ENCODE measurements at regions of chr22 and their contacts with region 1.

Region 1: DNA sequence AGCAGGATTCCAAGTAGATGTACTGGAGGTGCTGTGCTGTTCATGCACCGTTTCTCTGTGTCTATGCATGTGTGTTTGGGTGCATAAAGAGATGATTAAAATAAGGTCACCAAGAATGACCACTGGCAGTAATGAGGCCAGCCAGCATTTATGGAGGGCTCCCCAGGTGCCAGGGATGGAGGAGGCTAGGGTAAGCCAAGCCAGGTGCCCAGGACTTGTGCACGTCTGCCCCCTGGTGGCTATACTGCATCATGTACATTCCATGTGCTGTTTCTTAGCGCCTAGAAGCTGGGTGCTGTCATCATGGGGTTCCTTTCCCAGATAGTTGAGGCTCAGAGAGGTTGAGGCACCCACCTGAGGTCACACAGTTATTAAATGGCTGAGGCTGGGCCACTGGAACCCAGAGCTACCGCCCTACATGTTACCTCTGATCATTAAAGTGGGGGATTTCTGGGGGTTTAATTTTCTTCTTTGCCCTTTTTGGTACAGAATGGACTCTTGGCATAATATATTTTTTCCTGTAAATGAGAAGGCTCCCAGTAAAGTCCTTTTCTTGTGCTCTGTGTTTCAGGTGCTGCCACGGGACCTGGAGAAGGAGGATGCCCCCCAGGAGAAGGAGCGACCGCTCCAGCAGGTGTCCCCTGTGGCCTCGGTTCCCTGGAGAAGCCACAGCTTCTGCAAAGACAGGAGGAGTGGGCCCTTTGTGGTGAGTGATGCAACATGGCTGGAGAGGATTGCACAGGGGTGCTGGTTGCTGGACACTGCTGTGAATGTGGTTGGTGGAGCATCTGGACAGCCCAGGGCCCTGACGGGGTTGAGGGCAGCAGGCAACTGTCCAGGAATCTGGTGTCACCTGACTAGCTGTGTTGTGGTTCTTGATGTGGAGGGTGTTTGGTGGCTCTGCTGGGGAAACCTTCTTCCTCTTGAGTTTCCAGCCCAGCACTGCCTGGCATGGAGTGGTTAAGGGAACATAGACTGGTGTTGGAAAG is 96.4 kb downstream of the KIAA1671 start:
- DNase-seq: peak; percentile 80
- H3K4me3 Mint-ChIP-seq: no peak overlapping the region
- H3K27ac Mint-ChIP-seq: no peak overlapping the region
- H3K4me1 Mint-ChIP-seq: peaks cover 6% of the 10 kb centered on the region
- H3K27me3 Mint-ChIP-seq: no peaks in the 10 kb centered on the region

Region 2: DNA sequence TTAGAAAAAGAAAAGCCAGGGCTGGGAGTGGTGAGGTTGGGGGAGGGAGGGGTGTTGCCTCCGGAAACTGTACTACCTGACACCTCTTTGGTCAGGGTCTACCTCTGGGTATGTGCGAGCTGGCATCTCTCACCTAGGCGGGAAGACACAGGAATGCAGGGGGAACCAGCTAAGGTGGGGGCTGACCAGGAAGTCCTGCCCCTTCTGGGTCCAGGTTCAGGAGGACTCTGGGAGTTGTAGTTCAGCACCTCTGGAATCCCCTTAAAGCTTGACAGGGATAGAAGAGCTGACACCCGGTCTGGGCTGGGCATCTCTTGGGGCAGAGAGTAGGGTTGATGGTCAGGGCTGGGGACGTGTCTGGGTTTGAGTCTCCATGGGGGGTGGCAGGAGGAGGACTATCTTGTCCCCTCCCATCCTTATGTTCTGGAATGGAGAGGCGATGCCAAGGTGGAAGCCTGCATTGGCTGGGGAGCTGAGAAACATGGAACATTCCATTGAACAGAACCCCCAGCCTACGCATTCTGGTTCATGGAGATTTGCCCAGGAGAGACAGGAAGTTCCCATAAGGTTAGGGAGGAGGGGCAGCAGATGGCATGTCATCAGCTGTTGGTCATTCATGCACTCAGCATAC is 98.6 kb before region 1 on chr22:
- CTCF ChIA-PET with region 1: interaction called, 11 read pairs
- POLR2A ChIA-PET with region 1: interaction called, 3 read pairs
- DNase-seq: no peak
- H3K4me3 Mint-ChIP-seq: peak overlapping the region; percentile 52
- H3K27ac Mint-ChIP-seq: no peak overlapping the region
- H3K4me1 Mint-ChIP-seq: peaks cover 37% of the 10 kb centered on the region
- H3K27me3 Mint-ChIP-seq: peaks cover 67% of the 10 kb centered on the region

Region 3: GRCh38 chr22:25014896-25015755 is 33.8 kb before region 1 on chr22:
- CTCF ChIA-PET with region 1: interaction called, 13 read pairs
- POLR2A ChIA-PET with region 1: no interaction called
- DNase-seq: no peak
- H3K4me3 Mint-ChIP-seq: no peak overlapping the region
- H3K27ac Mint-ChIP-seq: no peak overlapping the region
- H3K4me1 Mint-ChIP-seq: peaks cover 5% of the 10 kb centered on the region
- H3K27me3 Mint-ChIP-seq: peaks cover 25% of the 10 kb centered on the region

Region 4: GRCh38 chr22:25038771-25039170 is 10.2 kb before region 1 on chr22:
- CTCF ChIA-PET with region 1: no interaction called
- POLR2A ChIA-PET with region 1: no interaction called
- DNase-seq: no peak
- H3K4me3 Mint-ChIP-seq: no peak overlapping the region
- H3K27ac Mint-ChIP-seq: no peak overlapping the region
- H3K4me1 Mint-ChIP-seq: no peaks in the 10 kb centered on the region
- H3K27me3 Mint-ChIP-seq: no peaks in the 10 kb centered on the region